ENCODE measurements at regions of chr17 and their contacts with region 1.

Region 1: DNA sequence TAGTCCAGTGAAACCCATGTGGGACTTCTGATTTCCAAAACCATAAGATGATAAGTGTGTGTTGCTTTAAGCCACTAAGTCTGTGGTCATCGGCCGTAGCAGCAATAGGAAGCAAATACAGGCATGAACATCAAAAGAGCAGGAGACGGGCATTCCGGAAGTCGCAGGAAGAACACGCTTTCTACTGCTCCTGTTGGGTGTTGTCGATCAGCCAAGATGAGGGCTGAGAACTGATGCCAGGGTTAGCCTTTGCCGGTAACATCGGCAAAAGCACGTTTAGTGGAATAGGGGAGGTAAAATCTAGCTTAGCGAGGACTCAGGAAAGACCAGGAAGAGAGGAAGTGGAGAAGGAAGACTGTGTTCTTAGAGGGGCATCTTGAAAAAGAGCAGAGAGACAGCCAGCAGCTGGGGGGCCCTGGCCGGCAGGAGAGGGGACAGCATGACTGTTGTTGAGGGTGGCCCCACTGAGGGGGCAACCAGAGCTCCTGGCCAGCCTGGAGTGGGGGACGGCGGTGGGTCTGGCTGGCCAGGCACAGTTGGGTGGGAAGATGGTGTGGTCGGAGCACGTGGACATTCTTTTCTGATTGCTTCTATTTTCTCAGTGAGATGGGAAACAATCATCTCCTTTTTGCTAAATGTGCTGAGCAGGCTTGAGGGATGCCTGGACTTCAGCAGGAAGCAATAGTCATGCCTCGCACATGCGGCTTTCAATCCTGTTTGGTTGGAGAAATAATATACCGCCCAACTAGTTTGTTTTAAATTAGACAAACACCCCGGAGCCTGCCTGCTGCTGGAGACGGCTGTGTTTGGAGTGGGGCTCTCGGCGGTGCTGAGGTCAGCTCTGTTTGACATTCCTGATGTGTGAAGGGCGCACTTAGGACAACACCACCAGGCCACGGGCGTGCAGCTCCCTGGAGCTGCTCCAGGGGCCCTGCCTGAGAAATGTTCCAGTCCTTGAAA is 109.9 kb downstream of the METRNL start:
- DNase-seq: peak; percentile 63 to 69
- H3K4me3 ChIP-seq: no peak overlapping the region
- H3K4me3 Mint-ChIP-seq: no peak overlapping the region
- H3K27ac Mint-ChIP-seq: peak overlapping the region; percentile 69
- H3K4me1 ChIP-seq: peaks cover 8% of the 10 kb centered on the region; the same call in 1 of the 2 replicates
- H3K4me1 Mint-ChIP-seq: peaks cover 21% of the 10 kb centered on the region
- H3K27me3 ChIP-seq: no peaks in the 10 kb centered on the region
- H3K27me3 Mint-ChIP-seq: no peaks in the 10 kb centered on the region
- CTCF ChIP-seq: no peak

Region 2: DNA sequence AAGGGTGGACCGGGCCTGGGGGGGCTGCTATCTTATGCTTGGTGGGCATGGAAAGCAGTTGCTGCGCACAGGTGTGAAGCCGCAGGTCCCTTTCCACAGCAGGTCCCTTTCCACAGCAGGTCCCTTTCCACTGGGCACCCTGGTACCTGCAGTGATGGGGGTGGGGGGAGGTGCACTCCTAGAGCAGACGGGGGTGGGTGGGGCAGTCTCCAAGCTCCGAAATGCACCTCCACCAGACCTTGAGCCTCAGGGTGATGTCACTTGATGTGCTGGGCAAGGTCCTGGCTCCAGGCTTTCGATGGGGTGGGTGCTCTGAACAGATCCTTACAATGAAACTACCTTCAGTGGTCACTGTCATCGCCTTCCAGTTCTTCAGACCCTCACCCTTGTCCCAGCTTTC is 111.5 kb before region 1 on chr17:
- CTCF ChIA-PET with region 1: no interaction called
- POLR2A ChIA-PET with region 1: no interaction called
- intact Hi-C with region 1: no loop called
- DNase-seq: no peak
- H3K4me3 ChIP-seq: no peak overlapping the region
- H3K4me3 Mint-ChIP-seq: peak overlapping the region; percentile 63
- H3K27ac Mint-ChIP-seq: no peak overlapping the region
- H3K4me1 ChIP-seq: peaks cover 40% of the 10 kb centered on the region
- H3K4me1 Mint-ChIP-seq: peaks cover 7% of the 10 kb centered on the region
- H3K27me3 ChIP-seq: no peaks in the 10 kb centered on the region; the same call in 1 of the 2 replicates
- H3K27me3 Mint-ChIP-seq: peaks cover 3% of the 10 kb centered on the region
- CTCF ChIP-seq: no peak

Region 3: DNA sequence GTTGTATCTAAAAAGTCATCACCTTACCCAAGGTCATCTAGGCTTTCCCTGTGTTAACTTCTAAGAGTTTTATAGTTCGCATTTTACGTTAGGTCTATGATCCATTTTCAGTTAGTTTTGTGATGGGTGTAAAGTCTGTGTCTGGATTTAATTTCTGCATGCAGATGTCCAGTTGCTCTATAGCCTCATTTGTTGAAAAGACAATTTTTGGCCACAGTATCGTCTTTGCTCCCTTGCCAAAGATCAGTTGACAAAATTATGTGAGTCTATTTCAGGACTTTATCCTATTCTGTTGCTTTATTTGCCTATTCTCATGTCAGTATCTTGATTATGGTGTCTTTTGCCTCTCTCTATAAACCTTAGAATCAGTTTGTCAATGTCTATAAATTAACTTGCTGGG is 24.8 kb before region 1 on chr17:
- CTCF ChIA-PET with region 1: no interaction called
- POLR2A ChIA-PET with region 1: no interaction called
- intact Hi-C with region 1: no loop called
- DNase-seq: no peak
- H3K4me3 ChIP-seq: no peak overlapping the region
- H3K4me3 Mint-ChIP-seq: no peak overlapping the region
- H3K27ac Mint-ChIP-seq: no peak overlapping the region
- H3K4me1 ChIP-seq: no peaks in the 10 kb centered on the region
- H3K4me1 Mint-ChIP-seq: no peaks in the 10 kb centered on the region
- H3K27me3 ChIP-seq: no peaks in the 10 kb centered on the region
- H3K27me3 Mint-ChIP-seq: peaks cover 6% of the 10 kb centered on the region
- CTCF ChIP-seq: no peak

Region 4: DNA sequence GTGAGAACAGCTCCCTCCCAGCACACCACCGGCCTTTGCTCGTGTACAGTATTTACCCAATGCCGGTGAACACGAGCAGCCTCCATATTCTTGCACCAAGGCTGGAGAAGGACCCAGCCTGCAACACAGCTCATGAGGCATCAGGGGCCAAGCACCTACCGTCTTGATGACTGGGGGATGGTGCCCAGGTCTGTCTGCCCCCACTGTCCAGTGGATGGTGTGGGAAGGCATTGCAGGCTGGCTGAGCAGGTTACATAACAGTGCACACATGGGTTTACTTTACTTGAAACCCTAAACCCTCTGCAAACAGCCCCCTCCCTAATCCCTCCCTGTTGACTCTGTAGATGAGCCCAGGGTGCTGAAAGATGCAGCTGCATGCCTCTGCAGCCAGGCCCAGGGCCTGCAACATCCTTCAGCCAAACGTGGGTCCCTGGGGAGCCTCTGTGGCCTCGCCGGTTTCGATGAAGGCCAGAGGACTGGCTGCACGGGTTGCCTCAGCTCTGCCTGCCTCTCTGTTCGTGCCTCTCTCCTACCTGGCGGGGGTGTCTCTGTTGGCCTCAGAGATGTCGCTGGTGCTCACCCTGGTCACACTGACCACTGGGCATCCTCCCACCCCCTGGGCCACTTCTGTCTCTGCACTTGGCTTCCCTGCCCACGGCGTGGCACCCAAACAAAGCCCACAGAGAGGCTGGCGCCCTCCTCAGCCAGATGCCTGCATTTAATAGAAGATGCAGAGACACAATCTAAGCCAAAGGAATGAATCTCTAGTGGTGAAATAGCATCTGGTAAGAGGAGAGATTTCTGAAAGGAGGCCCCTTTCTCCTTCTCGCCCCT is 14.8 kb before region 1 on chr17:
- CTCF ChIA-PET with region 1: no interaction called
- POLR2A ChIA-PET with region 1: interaction called, 4 read pairs
- intact Hi-C with region 1: loop called (anchors 1 kb)
- DNase-seq: peak; percentile 88 to 91
- H3K4me3 ChIP-seq: no peak overlapping the region
- H3K4me3 Mint-ChIP-seq: no peak overlapping the region
- H3K27ac Mint-ChIP-seq: peak overlapping the region; percentile 78
- H3K4me1 ChIP-seq: peaks cover 20% of the 10 kb centered on the region
- H3K4me1 Mint-ChIP-seq: no peaks in the 10 kb centered on the region
- H3K27me3 ChIP-seq: no peaks in the 10 kb centered on the region
- H3K27me3 Mint-ChIP-seq: no peaks in the 10 kb centered on the region
- CTCF ChIP-seq: no peak

Region 5: DNA sequence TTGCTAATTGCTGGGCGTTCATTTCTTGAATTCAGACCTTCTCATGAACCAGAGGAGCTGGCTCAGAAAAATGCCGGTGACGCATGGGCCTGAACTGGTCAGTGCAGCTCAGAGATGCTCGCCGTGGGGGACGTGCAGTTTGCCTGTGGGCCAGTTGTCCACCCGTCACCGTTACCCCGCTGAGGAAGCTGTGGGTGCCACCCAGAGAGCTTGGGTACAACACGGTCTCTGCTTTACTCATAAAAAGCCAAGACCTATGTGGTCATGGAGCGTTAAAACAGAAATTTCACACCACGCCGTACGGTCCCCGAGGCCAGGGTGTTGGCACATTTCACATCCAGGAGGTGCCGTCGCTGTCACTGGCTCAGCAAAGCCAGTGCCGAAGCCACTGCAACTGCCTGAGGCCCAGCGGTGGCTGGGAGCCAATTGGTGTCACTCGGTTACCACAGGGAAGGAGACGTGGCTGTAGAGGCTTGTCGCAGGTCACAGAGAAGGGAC is 10.9 kb after region 1 on chr17:
- CTCF ChIA-PET with region 1: no interaction called
- POLR2A ChIA-PET with region 1: no interaction called
- intact Hi-C with region 1: no loop called
- DNase-seq: peak in 1 of 2 experiments; percentile 19
- H3K4me3 ChIP-seq: no peak overlapping the region
- H3K4me3 Mint-ChIP-seq: no peak overlapping the region
- H3K27ac Mint-ChIP-seq: no peak overlapping the region
- H3K4me1 ChIP-seq: no peaks in the 10 kb centered on the region
- H3K4me1 Mint-ChIP-seq: no peaks in the 10 kb centered on the region
- H3K27me3 ChIP-seq: no peaks in the 10 kb centered on the region
- H3K27me3 Mint-ChIP-seq: no peaks in the 10 kb centered on the region
- CTCF ChIP-seq: no peak

Measured in Caco-2 (cell line).